AG04450 (cell line): ENCODE measurements at regions of chr17 and their contacts with region 1.

Region 1: GRCh38 chr17:16380640-16381495 is at the start of gene UBB:
- DNase-seq: peak; percentile 99
- H3K4me3 ChIP-seq: peak within 1 kb of the TSS; percentile 87
- H3K27ac ChIP-seq: peak within 1 kb of the TSS; percentile 94
- H3K27me3 ChIP-seq: no peaks in the 10 kb centered on the region
- CTCF ChIP-seq: no peak
- polyA plus RNA-seq, gene UBB: 1,944 and 3,172 TPM in 2 replicates

Region 2: GRCh38 chr17:16259926-16260325 is 120.9 kb before region 1 on chr17:
- CTCF ChIA-PET with region 1: no interaction called
- POLR2A ChIA-PET with region 1: interaction called, 13 read pairs
- DNase-seq: no peak
- H3K4me3 ChIP-seq: no peak overlapping the region
- H3K27ac ChIP-seq: no peak overlapping the region
- H3K27me3 ChIP-seq: no peaks in the 10 kb centered on the region
- CTCF ChIP-seq: no peak

Region 3: GRCh38 chr17:16304830-16305229 is 76.0 kb before region 1 on chr17:
- CTCF ChIA-PET with region 1: no interaction called
- POLR2A ChIA-PET with region 1: interaction called, 10 read pairs
- DNase-seq: no peak
- H3K4me3 ChIP-seq: no peak overlapping the region
- H3K27ac ChIP-seq: no peak overlapping the region
- H3K27me3 ChIP-seq: no peaks in the 10 kb centered on the region
- CTCF ChIP-seq: peak; percentile 72

Region 4: DNA sequence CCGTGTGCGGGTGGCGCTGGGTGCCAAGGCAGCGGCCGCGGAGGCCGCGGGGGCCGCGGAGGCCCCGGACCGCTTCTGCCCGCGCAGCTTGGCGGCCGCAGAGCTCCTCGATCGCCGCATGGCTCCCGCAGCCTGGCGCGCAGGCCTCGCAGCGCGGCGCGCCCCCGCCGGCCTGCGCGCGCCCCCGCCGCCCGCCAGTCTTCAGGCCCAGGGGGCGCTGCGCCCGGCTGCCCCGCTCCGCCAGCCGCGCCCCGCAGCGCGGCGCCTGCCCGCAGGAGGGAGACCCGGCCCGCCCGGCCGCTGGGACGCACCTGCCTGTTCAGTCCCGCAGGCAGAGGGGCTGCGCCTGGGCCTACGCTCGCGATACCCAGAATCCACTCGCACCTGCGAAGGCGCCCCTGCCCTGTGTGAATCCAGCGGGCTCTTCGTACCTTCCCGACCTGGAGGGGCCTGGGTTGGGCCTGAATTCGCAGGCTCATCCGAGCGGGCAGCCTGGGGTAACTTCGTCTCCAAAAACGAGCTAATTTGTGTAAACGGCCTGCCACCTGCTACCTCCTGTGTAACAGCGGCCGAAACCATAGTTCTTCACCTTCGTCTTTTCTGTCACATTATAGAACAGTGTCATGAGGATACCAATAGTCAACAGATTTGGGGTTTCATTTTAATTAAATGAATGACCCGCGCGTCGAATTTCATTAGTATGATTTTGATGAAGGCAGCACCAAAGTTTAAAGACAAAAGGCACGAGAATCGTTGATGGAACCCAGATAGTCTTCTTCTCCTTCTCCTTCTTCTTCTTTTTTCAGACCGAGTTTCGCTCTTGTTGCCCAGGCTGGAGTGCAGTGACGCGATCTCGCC is 27.3 kb before region 1 on chr17 and contains the start of gene CENPV:
- CTCF ChIA-PET with region 1: interaction called, 4 read pairs
- POLR2A ChIA-PET with region 1: interaction called, 20 read pairs
- DNase-seq: no peak
- H3K4me3 ChIP-seq: peak within 1 kb of the TSS; percentile 74
- H3K27ac ChIP-seq: peak within 1 kb of the TSS; percentile 80
- H3K27me3 ChIP-seq: no peaks in the 10 kb centered on the region
- CTCF ChIP-seq: peak; percentile 7; the same call in 1 of the 2 replicates
- polyA plus RNA-seq, gene CENPV: 65.2 and 71.9 TPM in 2 replicates

Region 5: GRCh38 chr17:16407911-16408588 is 27.2 kb after region 1 on chr17:
- CTCF ChIA-PET with region 1: interaction called, 8 read pairs
- POLR2A ChIA-PET with region 1: interaction called, 19 read pairs
- DNase-seq: no peak
- H3K4me3 ChIP-seq: no peak overlapping the region
- H3K27ac ChIP-seq: no peak overlapping the region
- H3K27me3 ChIP-seq: no peaks in the 10 kb centered on the region
- CTCF ChIP-seq: no peak

Region 6: DNA sequence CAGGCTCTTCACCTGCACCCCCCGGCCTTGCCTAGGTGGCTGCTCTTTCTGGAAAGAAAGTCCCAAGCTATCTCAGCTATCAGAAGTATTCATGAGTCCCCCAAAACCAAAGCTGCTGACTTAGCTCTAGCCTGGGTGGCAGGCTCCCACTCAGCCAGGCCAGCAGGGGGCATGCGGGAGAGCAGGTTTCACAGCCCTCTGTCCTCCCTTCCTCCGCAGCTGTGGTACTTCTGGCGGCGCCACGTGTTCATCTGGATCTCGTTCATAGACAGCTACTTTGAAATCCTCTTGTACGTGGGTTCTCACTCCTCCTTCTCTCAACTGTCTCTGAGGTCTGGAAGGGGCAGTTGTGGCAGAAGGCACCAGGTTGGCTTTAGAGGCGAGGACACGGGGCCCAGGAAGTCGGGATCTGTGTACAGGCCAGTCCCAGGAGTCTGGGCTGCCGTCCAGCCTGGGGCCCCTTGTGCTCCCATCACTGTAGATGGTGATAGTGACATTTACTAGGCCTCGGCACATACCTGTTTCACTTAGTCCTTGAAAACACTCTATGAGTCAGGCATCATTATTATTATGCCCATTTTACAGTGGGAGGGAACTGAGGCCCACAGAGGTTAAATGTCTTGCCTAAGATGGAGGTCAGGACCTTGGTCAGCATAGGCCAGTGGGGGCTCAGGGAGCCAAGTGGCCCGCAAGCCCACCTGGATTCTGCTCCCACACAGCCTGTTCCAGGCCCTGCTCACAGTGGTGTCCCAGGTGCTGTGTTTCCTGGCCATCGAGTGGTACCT is 47.4 kb after region 1 on chr17:
- CTCF ChIA-PET with region 1: interaction called, 3 read pairs
- POLR2A ChIA-PET with region 1: interaction called, 17 read pairs
- DNase-seq: no peak
- H3K4me3 ChIP-seq: no peak overlapping the region
- H3K27ac ChIP-seq: peak overlapping the region; percentile 52
- H3K27me3 ChIP-seq: no peaks in the 10 kb centered on the region
- CTCF ChIP-seq: peak; percentile 81

Region 7: GRCh38 chr17:16444258-16444886 is 63.5 kb after region 1 on chr17:
- CTCF ChIA-PET with region 1: interaction called, 3 read pairs
- POLR2A ChIA-PET with region 1: interaction called, 102 read pairs
- DNase-seq: no peak
- H3K4me3 ChIP-seq: no peak overlapping the region
- H3K27ac ChIP-seq: peak overlapping the region; percentile 52
- H3K27me3 ChIP-seq: no peaks in the 10 kb centered on the region
- CTCF ChIP-seq: no peak